ENCODE measurements at regions of chr15 and their contacts with region 1.

Region 1: DNA sequence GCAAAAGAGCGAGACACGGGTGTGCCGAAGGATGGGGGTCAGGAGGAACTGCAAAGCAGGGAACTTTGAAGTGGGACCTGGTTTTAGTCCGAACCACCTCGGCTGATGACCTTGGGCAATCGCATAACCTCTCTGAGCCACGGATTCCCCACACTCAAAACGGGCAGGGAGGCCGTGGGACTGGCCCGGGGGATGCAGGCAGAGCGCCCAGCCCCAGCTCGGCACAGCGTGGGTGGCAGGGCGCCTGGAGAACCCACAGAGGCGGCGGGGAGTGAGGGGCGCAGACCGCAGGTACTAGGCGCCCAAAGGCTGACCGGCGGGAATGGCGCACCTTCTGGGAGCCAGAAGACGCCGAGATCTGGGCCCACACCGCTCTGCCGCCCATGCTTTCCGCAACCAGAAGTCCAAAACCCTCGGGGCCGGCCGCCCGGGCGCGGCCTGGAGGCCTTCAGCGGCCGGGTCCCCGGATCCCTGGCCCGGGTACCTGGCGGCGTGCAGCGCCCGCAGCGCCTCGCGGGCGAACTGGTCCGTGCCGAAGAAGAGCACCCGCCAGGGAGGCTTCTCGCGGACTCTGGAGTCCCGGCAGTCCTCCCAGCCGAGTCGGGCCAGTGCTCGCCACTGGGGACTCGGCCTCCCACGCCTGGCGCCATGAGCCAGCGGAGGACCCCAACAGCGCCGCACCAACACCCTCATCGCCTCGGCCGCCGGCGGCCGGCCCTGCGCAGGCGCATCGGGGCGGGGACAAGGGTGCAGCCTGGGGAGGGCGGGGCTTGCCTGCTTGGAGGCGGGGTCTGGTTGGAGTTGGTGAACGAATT is at the start of gene MTFMT:
- DNase-seq: peak; percentile 84 to 94 (median 90)
- H3K4me3 ChIP-seq: peak within 1 kb of the TSS; percentile 59 to 100 (median 94)
- H3K27ac ChIP-seq: peak within 1 kb of the TSS in 55 of 59 donors; percentile 3 to 92 (median 72)
- H3K27me3 ChIP-seq: no peaks in the 10 kb centered on the region
- CTCF ChIP-seq: peak in 30 of 56 donors; percentile 9 to 60 (median 30)
- total RNA-seq, gene MTFMT: 4.9 to 24.8 (median 15.2) TPM

Region 2: GRCh38 chr15:64989416-64990167 is 39.5 kb before region 1 on chr15 and contains the start of gene SPG21:
- intact Hi-C with region 1: loop called (anchors 2 to 5 kb)
- DNase-seq: peak; percentile 77 to 95 (median 90)
- H3K4me3 ChIP-seq: peak within 1 kb of the TSS; percentile 57 to 99 (median 91)
- H3K27ac ChIP-seq: peak within 1 kb of the TSS; percentile 71 to 97 (median 92)
- H3K27me3 ChIP-seq: no peaks in the 10 kb centered on the region
- CTCF ChIP-seq: peak in 8 of 56 donors; percentile 10 to 36 (median 18)
- total RNA-seq, gene SPG21: 41.3 to 69.1 (median 50.6) TPM

Region 3: DNA sequence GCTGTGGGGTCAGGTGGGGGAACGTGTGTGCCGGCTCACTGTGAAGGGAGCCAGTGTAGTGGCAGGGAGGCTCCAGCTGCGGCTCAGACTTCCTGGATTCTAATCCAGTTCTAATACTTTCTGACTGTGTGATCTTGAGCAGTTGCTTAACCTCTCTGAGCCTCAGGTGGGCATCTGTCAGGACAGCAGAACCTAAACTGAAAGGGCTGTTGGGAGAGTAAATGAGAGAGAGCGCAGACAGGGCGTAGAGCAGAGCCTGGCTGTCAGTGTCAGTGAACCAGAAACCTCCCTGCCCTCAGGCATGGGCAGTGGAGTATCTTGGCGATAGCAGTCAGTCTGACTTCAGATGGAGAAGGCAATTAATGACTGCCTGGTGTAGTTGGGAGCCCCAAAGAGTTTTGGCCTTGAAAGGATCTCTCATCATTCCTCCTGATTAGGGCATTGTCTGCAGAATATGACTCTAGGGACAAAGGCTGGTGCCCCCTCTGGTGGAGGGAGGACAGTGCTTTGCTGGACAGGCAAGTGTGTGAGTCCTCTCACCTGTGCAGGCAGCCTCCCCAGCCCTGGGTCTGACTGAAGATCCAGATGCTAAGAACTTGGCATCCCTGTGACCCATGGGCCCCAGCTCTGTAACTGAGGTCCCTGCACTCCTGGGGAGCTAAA is 57.0 kb after region 1 on chr15:
- intact Hi-C with region 1: loop called in 1 of 2 experiments (anchors 10 kb)
- DNase-seq: peak in 1 of 10 donors; percentile 23
- H3K4me3 ChIP-seq: no peak overlapping the region
- H3K27ac ChIP-seq: peak overlapping the region in 11 of 59 donors; percentile 1 to 67 (median 34)
- H3K27me3 ChIP-seq: peaks cover 0 to 9% (median 0%) of the 10 kb centered on the region in 45 donors
- CTCF ChIP-seq: peak in 30 of 56 donors; percentile 7 to 43 (median 24)